ENCODE measurements at regions of chr17 and their contacts with region 1.

Region 1: GRCh38 chr17:35514564-35514963 is 22.9 kb downstream of the SLFN12L start:
- DNase-seq: no peak

Region 2: DNA sequence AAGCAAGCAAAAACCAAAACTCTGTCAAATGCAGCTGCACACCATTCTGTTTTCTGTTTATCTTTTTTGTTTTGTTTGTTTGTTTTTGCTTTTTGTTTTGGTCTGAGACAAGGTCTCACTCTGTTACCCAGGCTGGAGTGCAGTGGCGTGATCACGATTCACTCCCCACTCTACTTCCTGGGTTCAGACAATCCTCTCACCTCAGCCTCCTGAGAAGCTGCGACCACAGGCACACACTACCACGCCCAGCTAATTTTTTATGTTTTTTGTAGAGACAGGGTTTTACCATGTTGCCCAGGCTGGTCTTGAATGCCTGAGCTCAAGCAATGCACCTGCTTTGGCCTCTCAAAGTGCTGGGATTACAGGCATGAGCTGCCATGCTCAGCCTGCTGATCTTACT is 46.7 kb before region 1 on chr17:
- intact Hi-C with region 1: loop called in 1 of 2 experiments (anchors 2 kb)
- DNase-seq: no peak

Region 3: DNA sequence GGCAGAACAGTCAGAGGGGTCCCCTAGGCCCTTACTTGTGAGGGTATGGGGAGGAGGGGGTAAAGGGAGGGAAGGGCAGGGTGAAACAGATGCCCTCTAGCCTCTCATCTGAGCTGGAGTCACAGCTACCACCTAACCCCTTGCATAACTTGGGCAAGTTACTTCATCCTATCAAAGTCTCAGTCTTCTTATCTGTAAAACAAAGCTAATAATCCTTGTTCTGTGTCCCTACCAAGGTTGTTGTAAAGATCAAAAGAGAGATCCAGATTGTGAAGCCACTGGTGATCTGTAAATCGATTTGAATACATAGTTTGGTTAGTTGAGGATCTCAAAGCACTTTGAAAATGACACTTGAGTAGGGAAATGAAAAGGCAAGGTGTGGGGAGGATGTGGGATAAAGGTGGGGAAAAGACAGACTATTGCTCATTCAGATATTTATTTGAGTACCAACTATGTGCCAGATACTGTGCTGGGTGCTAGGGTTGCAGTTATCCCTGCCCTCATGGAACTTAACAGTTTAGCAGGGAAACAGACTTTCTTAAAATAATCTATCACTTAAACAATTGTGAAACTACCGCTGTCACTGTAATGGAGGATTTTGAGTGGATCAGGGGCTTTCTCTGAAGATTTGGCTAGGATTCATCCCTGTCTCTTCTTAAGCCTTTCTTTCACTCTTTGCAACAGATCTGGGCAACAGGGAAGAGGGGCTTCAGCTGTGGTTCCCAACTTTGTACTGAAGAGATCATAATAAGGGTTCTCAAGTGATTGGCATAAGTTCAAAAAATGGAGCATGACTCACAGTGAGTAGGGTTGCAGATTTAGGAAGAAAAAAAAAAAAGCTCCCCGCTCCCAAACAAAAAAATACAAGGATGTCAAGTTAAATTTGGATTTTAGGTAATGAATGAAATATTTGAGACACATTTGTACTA is 351.1 kb after region 1 on chr17:
- intact Hi-C with region 1: loop called in 1 of 2 experiments (anchors 10 kb)
- DNase-seq: no peak

Measured in posterior vena cava (tissue), 2 donors.